ENCODE measurements at regions of chr11 and their contacts with region 1.

Region 1: GRCh38 chr11:64713031-64713780 is 9.8 kb downstream of the NRXN2 start:
- DNase-seq: peak; percentile 39
- H3K4me3 ChIP-seq: no peak overlapping the region
- H3K27ac ChIP-seq: no peak overlapping the region
- H3K4me1 ChIP-seq: no peaks in the 10 kb centered on the region
- H3K27me3 ChIP-seq: peaks cover 21% of the 10 kb centered on the region
- CTCF ChIP-seq: no peak

Region 2: GRCh38 chr11:64269380-64270234 is 443.6 kb before region 1 on chr11:
- CTCF ChIA-PET with region 1: no interaction called
- dilution Hi-C with region 1: loop called (anchors 10 kb)
- in situ Hi-C with region 1: no loop called
- intact Hi-C with region 1: no loop called
- DNase-seq: peak; percentile 99
- H3K4me3 ChIP-seq: peak overlapping the region; percentile 57 to 70 (median 59)
- H3K27ac ChIP-seq: peak overlapping the region; percentile 62
- H3K4me1 ChIP-seq: peaks cover 41% of the 10 kb centered on the region
- H3K27me3 ChIP-seq: no peaks in the 10 kb centered on the region
- CTCF ChIP-seq: peak in 1 of 2 donors; percentile 24

Region 3: GRCh38 chr11:64386306-64386702 is 326.9 kb before region 1 on chr11:
- CTCF ChIA-PET with region 1: no interaction called
- dilution Hi-C with region 1: loop called (anchors 5 kb)
- in situ Hi-C with region 1: no loop called
- intact Hi-C with region 1: no loop called
- DNase-seq: peak; percentile 83
- H3K4me3 ChIP-seq: no peak overlapping the region
- H3K27ac ChIP-seq: no peak overlapping the region
- H3K4me1 ChIP-seq: peaks cover 15% of the 10 kb centered on the region
- H3K27me3 ChIP-seq: peaks cover 2% of the 10 kb centered on the region
- CTCF ChIP-seq: no peak

Region 4: GRCh38 chr11:64458997-64459396 is 254.2 kb before region 1 on chr11:
- CTCF ChIA-PET with region 1: no interaction called
- dilution Hi-C with region 1: loop called (anchors 5 kb)
- in situ Hi-C with region 1: no loop called
- intact Hi-C with region 1: no loop called
- DNase-seq: no peak
- H3K4me3 ChIP-seq: no peak overlapping the region
- H3K27ac ChIP-seq: no peak overlapping the region
- H3K4me1 ChIP-seq: no peaks in the 10 kb centered on the region
- H3K27me3 ChIP-seq: no peaks in the 10 kb centered on the region
- CTCF ChIP-seq: no peak

Region 5: DNA sequence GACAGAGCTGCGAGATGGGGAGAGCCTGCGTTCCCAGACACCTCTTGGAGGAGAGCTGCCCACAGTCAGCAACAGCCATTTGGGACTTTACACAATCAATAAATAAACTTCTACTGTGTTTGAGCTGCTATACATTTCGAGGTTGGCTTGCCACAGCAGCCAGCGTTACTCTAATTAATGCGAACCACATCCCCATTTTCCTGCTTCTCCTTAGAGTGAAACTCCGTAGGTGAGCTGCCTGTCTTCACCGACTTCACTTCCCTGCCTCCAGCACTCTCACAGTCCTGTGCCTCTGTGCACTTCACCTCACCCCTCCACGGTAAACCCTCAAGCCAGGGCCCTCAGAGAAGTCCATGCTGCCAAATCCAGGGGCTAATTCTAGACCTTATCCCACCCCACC is 128.1 kb before region 1 on chr11:
- CTCF ChIA-PET with region 1: no interaction called
- dilution Hi-C with region 1: loop called (anchors 5 kb)
- in situ Hi-C with region 1: no loop called
- intact Hi-C with region 1: no loop called
- DNase-seq: no peak
- H3K4me3 ChIP-seq: no peak overlapping the region
- H3K27ac ChIP-seq: no peak overlapping the region
- H3K4me1 ChIP-seq: no peaks in the 10 kb centered on the region
- H3K27me3 ChIP-seq: no peaks in the 10 kb centered on the region
- CTCF ChIP-seq: no peak

Region 6: GRCh38 chr11:64750361-64751054 is 37.3 kb after region 1 on chr11:
- CTCF ChIA-PET with region 1: no interaction called
- dilution Hi-C with region 1: loop called (anchors 5 kb)
- in situ Hi-C with region 1: no loop called
- intact Hi-C with region 1: no loop called
- DNase-seq: no peak
- H3K4me3 ChIP-seq: no peak overlapping the region
- H3K27ac ChIP-seq: no peak overlapping the region
- H3K4me1 ChIP-seq: peaks cover 9% of the 10 kb centered on the region
- H3K27me3 ChIP-seq: no peaks in the 10 kb centered on the region
- CTCF ChIP-seq: no peak